MCF 10A (cell line): ENCODE measurements at regions of chr3 and their contacts with region 1.

Region 1: GRCh38 chr3:107676469-107677309 is 153.9 kb downstream of the BBX start:
- DNase-seq: no peak
- H3K4me3 Mint-ChIP-seq: no peak overlapping the region
- H3K27ac Mint-ChIP-seq: no peak overlapping the region
- H3K4me1 Mint-ChIP-seq: peaks cover 6% of the 10 kb centered on the region
- H3K27me3 Mint-ChIP-seq: no peaks in the 10 kb centered on the region
- CTCF ChIP-seq: peak; percentile 40

Region 2: GRCh38 chr3:107367353-107367752 is 309.3 kb before region 1 on chr3:
- CTCF ChIA-PET with region 1: no interaction called
- POLR2A ChIA-PET with region 1: no interaction called
- intact Hi-C with region 1: no loop called
- DNase-seq: peak; percentile 79
- H3K4me3 Mint-ChIP-seq: no peak overlapping the region
- H3K27ac Mint-ChIP-seq: peak overlapping the region; percentile 32
- H3K4me1 Mint-ChIP-seq: peaks cover 20% of the 10 kb centered on the region
- H3K27me3 Mint-ChIP-seq: no peaks in the 10 kb centered on the region
- CTCF ChIP-seq: no peak

Region 3: GRCh38 chr3:107660306-107660976 is 16.2 kb before region 1 on chr3:
- CTCF ChIA-PET with region 1: interaction called, 119 read pairs
- POLR2A ChIA-PET with region 1: interaction called, 7 read pairs
- intact Hi-C with region 1: no loop called
- DNase-seq: peak; percentile 54
- H3K4me3 Mint-ChIP-seq: no peak overlapping the region
- H3K27ac Mint-ChIP-seq: no peak overlapping the region
- H3K4me1 Mint-ChIP-seq: peaks cover 29% of the 10 kb centered on the region
- H3K27me3 Mint-ChIP-seq: no peaks in the 10 kb centered on the region
- CTCF ChIP-seq: peak; percentile 53

Region 4: DNA sequence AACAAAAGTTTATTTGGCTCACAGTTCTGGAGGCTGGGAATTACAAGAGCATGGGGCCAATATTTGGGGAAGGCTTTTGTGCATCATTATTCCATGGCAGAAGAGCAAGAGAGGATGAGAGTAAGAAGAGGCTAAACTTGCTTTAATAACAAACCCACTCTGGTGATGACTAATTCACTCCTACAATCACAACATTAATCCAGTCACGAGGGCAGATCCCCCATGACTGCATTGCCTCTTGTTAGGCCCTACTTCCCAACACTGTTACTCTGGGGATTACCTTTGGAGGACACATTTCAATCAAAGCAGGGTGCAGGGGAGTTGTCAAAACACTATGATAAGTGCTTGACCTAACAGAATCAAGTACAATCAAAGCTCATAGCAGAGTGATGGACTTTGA is 27.8 kb after region 1 on chr3:
- CTCF ChIA-PET with region 1: interaction called, 15 read pairs
- POLR2A ChIA-PET with region 1: no interaction called
- intact Hi-C with region 1: no loop called
- DNase-seq: no peak
- H3K4me3 Mint-ChIP-seq: no peak overlapping the region
- H3K27ac Mint-ChIP-seq: no peak overlapping the region
- H3K4me1 Mint-ChIP-seq: peaks cover 20% of the 10 kb centered on the region
- H3K27me3 Mint-ChIP-seq: no peaks in the 10 kb centered on the region
- CTCF ChIP-seq: no peak

Region 5: GRCh38 chr3:107740992-107741896 is 64.6 kb after region 1 on chr3:
- CTCF ChIA-PET with region 1: interaction called, 98 read pairs
- POLR2A ChIA-PET with region 1: interaction called, 3 read pairs
- intact Hi-C with region 1: loop called (anchors 1 kb)
- DNase-seq: peak; percentile 32
- H3K4me3 Mint-ChIP-seq: no peak overlapping the region
- H3K27ac Mint-ChIP-seq: no peak overlapping the region
- H3K4me1 Mint-ChIP-seq: no peaks in the 10 kb centered on the region
- H3K27me3 Mint-ChIP-seq: no peaks in the 10 kb centered on the region
- CTCF ChIP-seq: peak; percentile 38

Region 6: DNA sequence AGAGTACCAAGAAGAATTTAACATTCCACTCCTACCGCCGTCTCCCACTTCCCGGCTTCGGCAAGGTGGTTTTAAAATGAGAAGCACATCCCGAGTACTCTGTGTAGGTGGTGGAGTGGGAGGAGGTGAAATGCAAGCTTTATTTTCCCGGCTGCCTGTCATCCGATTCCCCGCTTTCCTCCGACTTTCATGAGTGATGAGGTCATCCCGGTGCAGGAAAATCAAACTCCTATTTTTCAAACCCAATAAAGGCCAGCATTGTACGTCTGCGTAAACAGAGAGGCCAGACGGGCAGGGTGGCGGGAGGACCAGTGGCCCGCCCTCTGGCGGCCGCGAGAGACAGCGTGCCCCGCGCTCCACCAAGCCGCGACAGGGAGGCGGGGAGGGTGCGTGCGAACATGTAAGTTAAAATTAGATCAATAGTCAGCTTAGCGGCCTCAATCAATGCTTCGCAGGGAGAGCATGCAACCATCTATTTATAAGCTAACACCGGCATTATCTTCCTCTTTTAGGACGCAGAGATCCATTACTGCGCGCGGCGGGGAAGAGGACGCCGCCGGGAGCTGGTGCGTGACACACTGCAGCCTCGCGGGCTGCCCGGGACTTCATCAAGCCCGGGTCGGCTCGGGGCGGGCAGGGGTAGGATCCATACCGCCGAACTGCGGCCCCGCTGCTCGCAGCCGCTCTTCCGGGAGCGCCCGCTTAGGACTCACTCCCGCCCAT is 250.8 kb after region 1 on chr3:
- CTCF ChIA-PET with region 1: interaction called, 17 read pairs
- POLR2A ChIA-PET with region 1: no interaction called
- intact Hi-C with region 1: loop called (anchors 1 kb)
- DNase-seq: peak; percentile 62
- H3K4me3 Mint-ChIP-seq: peak overlapping the region; percentile 71
- H3K27ac Mint-ChIP-seq: no peak overlapping the region
- H3K4me1 Mint-ChIP-seq: no peaks in the 10 kb centered on the region
- H3K27me3 Mint-ChIP-seq: no peaks in the 10 kb centered on the region
- CTCF ChIP-seq: peak; percentile 80